GM12878 (cell line): ENCODE measurements at regions of chr6 and their contacts with region 1.

Region 1: GRCh38 chr6:53426667-53427270 is 78.0 kb upstream of the ELOVL5 start:
- DNase-seq: peak; percentile 74
- ATAC-seq: peak; percentile 90
- H3K4me3 ChIP-seq: no peak overlapping the region
- H3K27ac ChIP-seq: no peak overlapping the region
- H3K4me1 ChIP-seq: peaks cover 4% of the 10 kb centered on the region; the same call in 1 of the 2 replicates
- H3K27me3 ChIP-seq: 0 out of 4 replicates have a peak, but pooled peaks cover 0 to 7% of the 10 kb centered on the region in 2 experiments
- CTCF ChIP-seq: no peak
- EP300 ChIP-seq: peak; percentile 65 to 90; a peak in 3 of 4 replicates
- POLR2A ChIP-seq: no peak
- RAD21 ChIP-seq: no peak

Region 2: DNA sequence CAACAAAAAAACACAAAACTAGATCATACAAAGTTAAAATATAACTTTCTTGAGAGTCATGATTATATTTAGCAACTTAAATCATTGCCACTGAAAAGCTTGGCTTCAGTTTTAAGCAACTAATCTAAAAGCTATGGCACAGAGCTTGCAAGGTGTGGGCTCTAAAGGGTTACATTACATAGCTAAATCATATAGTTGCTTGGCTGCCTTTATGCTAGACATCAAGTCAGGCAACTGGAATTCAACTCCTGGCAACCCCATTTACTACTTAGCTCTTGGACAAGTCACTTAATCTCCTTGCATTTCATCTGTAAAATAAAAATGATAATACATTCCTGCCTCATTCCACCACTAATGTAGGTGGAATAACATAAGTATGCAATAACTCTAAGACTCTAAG is 237.2 kb before region 1 on chr6:
- CTCF ChIA-PET with region 1: no interaction called
- POLR2A ChIA-PET with region 1: no interaction called
- RAD21 ChIA-PET with region 1: interaction called, 13 read pairs
- SMC1A ChIA-PET with region 1: interaction called, 6 read pairs
- in situ Hi-C with region 1: no loop called
- intact Hi-C with region 1: no loop called
- DNase-seq: no peak
- ATAC-seq: peak; percentile 20; the same call in 2 of the 3 replicates
- H3K4me3 ChIP-seq: no peak overlapping the region
- H3K27ac ChIP-seq: no peak overlapping the region
- H3K4me1 ChIP-seq: no peaks in the 10 kb centered on the region; the same call in 1 of the 2 replicates
- H3K27me3 ChIP-seq: no peaks in the 10 kb centered on the region
- CTCF ChIP-seq: no peak
- EP300 ChIP-seq: no peak
- POLR2A ChIP-seq: no peak
- RAD21 ChIP-seq: no peak

Region 3: GRCh38 chr6:53300656-53301551 is 125.9 kb before region 1 on chr6:
- CTCF ChIA-PET with region 1: interaction called, 4 read pairs
- POLR2A ChIA-PET with region 1: interaction called, 3 read pairs
- RAD21 ChIA-PET with region 1: interaction called, 4 read pairs
- SMC1A ChIA-PET with region 1: interaction called, 16 read pairs
- in situ Hi-C with region 1: no loop called
- intact Hi-C with region 1: no loop called
- DNase-seq: no peak
- ATAC-seq: peak; percentile 47
- H3K4me3 ChIP-seq: no peak overlapping the region
- H3K27ac ChIP-seq: no peak overlapping the region
- H3K4me1 ChIP-seq: peaks cover 4% of the 10 kb centered on the region
- H3K27me3 ChIP-seq: no peaks in the 10 kb centered on the region
- CTCF ChIP-seq: no peak
- EP300 ChIP-seq: no peak
- POLR2A ChIP-seq: no peak
- RAD21 ChIP-seq: no peak

Region 4: DNA sequence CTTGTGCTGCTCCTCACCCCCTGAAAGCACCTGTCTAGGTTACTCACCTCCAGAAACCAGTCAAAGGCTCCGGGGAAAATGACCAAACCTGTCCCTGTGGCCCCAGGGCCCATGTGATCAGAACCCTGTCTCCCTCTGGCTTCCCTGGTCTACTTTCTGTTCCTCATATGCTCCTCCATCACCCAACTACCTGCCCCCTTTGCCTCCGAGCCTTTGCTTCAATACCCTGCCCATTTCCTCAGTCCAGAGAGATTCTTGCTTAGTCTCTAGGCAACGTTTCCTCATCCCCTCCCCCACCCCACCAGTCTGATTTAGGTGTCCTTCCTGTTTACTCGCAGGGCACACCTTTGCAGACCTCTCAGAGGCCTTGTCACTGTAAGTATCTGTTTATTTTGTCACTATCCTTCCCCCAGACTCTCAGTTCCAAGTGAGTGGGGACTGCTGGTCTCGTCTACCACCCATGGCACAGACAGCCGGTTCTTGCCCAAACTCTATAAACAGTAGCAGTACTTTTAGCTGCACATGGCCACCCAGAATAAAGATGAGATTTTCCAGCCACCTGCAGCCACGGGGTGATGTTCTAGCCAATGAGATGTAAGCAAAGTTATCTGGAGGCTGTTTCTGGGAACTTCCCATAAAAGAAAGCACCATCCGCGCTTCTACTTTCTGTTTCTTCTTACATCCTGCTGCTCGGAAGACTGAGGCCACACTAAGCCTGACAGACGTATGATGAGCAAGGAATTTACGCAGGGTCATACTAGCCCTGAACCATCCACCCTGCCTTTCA is 91.4 kb before region 1 on chr6:
- CTCF ChIA-PET with region 1: no interaction called
- POLR2A ChIA-PET with region 1: interaction called, 3 read pairs
- RAD21 ChIA-PET with region 1: interaction called, 16 read pairs
- SMC1A ChIA-PET with region 1: interaction called, 22 read pairs
- in situ Hi-C with region 1: no loop called
- intact Hi-C with region 1: no loop called
- DNase-seq: peak; percentile 88
- ATAC-seq: peak; percentile 90
- H3K4me3 ChIP-seq: peak overlapping the region; percentile 72
- H3K27ac ChIP-seq: peak overlapping the region; percentile 85
- H3K4me1 ChIP-seq: peaks cover 22% of the 10 kb centered on the region
- H3K27me3 ChIP-seq: no peaks in the 10 kb centered on the region
- CTCF ChIP-seq: no peak
- EP300 ChIP-seq: peak in 1 of 2 experiments; percentile 68; a peak in 2 of 4 replicates
- POLR2A ChIP-seq: peak; percentile 34; the same call in 1 of the 2 replicates
- RAD21 ChIP-seq: no peak

Region 5: GRCh38 chr6:53348371-53349208 is 78.2 kb before region 1 on chr6 and contains the start of gene ELOVL5:
- CTCF ChIA-PET with region 1: interaction called, 5 read pairs
- POLR2A ChIA-PET with region 1: interaction called, 20 read pairs
- RAD21 ChIA-PET with region 1: interaction called, 7 read pairs
- SMC1A ChIA-PET with region 1: interaction called, 9 read pairs
- in situ Hi-C with region 1: no loop called
- intact Hi-C with region 1: no loop called
- DNase-seq: peak; percentile 73
- ATAC-seq: peak; percentile 80
- H3K4me3 ChIP-seq: peak within 1 kb of the TSS; percentile 92
- H3K27ac ChIP-seq: peak within 1 kb of the TSS; percentile 85
- H3K4me1 ChIP-seq: peaks cover 11% of the 10 kb centered on the region
- H3K27me3 ChIP-seq: no peaks in the 10 kb centered on the region; a peak in 1 of 4 replicates
- CTCF ChIP-seq: no peak
- EP300 ChIP-seq: no peak
- POLR2A ChIP-seq: peak; percentile 81
- RAD21 ChIP-seq: no peak
- polyA plus RNA-seq, gene ELOVL5: 187 to 195 TPM

Region 6: GRCh38 chr6:53437557-53438202 is 10.9 kb after region 1 on chr6:
- CTCF ChIA-PET with region 1: interaction called, 51 read pairs
- POLR2A ChIA-PET with region 1: interaction called, 23 read pairs
- RAD21 ChIA-PET with region 1: interaction called, 125 read pairs
- SMC1A ChIA-PET with region 1: interaction called, 130 read pairs
- in situ Hi-C with region 1: no loop called
- intact Hi-C with region 1: no loop called
- DNase-seq: peak; percentile 27
- ATAC-seq: peak; percentile 69
- H3K4me3 ChIP-seq: no peak overlapping the region
- H3K27ac ChIP-seq: no peak overlapping the region
- H3K4me1 ChIP-seq: peaks cover 4% of the 10 kb centered on the region; the same call in 1 of the 2 replicates
- H3K27me3 ChIP-seq: peaks cover 0 to 5% of the 10 kb centered on the region in 2 experiments; a peak in 1 of 4 replicates
- CTCF ChIP-seq: peak; percentile 64 to 77 (median 67)
- EP300 ChIP-seq: no peak
- POLR2A ChIP-seq: no peak
- RAD21 ChIP-seq: peak; percentile 90